ENCODE measurements at regions of chr3 and their contacts with region 1.

Region 1: GRCh38 chr3:112734718-112735350 is 93.9 kb upstream of the CCDC80 start:
- DNase-seq: peak in 1 of 2 donors; percentile 14
- ATAC-seq: no peak
- H3K4me3 ChIP-seq: no peak overlapping the region
- H3K27ac ChIP-seq: no peak overlapping the region
- H3K4me1 ChIP-seq: no peaks in the 10 kb centered on the region
- H3K27me3 ChIP-seq: no peaks in the 10 kb centered on the region
- CTCF ChIP-seq: peak; percentile 27 to 55 (median 46)
- POLR2A ChIP-seq: no peak

Region 2: GRCh38 chr3:112908252-112908651 is 173.4 kb after region 1 on chr3:
- in situ Hi-C with region 1: no loop called
- intact Hi-C with region 1: no loop called
- DNase-seq: no peak
- ATAC-seq: no peak
- H3K4me3 ChIP-seq: no peak overlapping the region
- H3K27ac ChIP-seq: no peak overlapping the region
- H3K4me1 ChIP-seq: no peaks in the 10 kb centered on the region
- H3K27me3 ChIP-seq: no peaks in the 10 kb centered on the region
- CTCF ChIP-seq: no peak
- POLR2A ChIP-seq: no peak

Region 3: GRCh38 chr3:112979240-112979832 is 244.5 kb after region 1 on chr3:
- in situ Hi-C with region 1: loop called in 2 of 4 experiments (anchors 10 kb)
- intact Hi-C with region 1: loop called (anchors 5 kb)
- DNase-seq: no peak
- ATAC-seq: no peak
- H3K4me3 ChIP-seq: no peak overlapping the region
- H3K27ac ChIP-seq: no peak overlapping the region
- H3K4me1 ChIP-seq: peaks cover 0 to 4% of the 10 kb centered on the region in 2 donors
- H3K27me3 ChIP-seq: no peaks in the 10 kb centered on the region
- CTCF ChIP-seq: peak; percentile 46 to 80 (median 57)
- POLR2A ChIP-seq: no peak

Region 4: GRCh38 chr3:112984485-112984884 is 249.7 kb after region 1 on chr3:
- in situ Hi-C with region 1: loop called in 2 of 4 experiments (anchors 10 kb)
- intact Hi-C with region 1: loop called (anchors 5 kb)
- DNase-seq: peak; percentile 17 to 34
- ATAC-seq: peak; percentile 53 to 92
- H3K4me3 ChIP-seq: no peak overlapping the region
- H3K27ac ChIP-seq: peak overlapping the region in 2 of 4 donors; percentile 7 to 52
- H3K4me1 ChIP-seq: peaks cover 0 to 11% of the 10 kb centered on the region in 2 donors
- H3K27me3 ChIP-seq: no peaks in the 10 kb centered on the region
- CTCF ChIP-seq: no peak
- POLR2A ChIP-seq: no peak